Astrocyte of the cerebellum (primary cell): ENCODE measurements at regions of chr9 and their contacts with region 1.

Region 1: DNA sequence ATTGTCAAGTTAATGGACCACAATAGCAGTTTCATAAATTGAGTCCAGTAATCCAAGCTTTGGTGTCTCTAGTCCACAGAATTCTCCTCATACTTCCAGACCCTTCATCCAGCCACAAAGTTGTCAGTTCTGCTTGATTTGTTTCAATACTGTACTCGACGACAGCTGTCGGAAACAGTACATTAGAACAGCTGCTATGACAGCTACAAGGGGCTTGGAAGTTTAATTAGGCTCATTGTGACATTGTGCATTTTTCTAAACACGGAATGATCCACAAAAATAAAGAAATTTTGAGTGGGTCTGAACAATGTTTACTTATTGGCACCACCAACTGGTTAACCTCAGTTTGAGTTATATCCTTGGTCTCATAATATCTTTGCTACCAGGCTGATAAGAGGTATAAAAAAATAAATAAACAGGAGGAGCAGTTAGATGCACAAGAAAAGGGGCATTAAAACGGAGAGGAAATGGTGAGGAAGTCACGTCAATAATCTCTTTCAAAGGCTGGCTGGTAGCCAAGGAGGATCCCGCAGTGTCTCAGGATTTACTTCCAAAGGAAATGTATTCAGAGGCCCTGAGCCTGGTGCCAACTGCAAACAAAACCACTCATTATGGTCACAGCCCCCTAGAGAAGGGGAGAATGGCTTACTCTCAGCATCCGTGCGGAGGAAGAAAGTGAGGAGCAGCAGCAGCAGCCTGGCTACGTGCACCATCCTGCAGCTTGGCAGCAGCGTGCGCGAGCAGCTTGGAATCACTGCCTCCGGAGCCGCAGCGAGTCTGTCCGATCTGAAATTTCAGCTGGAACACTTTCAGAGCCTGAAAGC is 933.8 kb upstream of the DMAC1 start:
- DNase-seq: peak; percentile 36
- H3K4me3 ChIP-seq: peak overlapping the region; percentile 8
- CTCF ChIP-seq: no peak

Region 2: GRCh38 chr9:8845376-8845775 is 112.0 kb after region 1 on chr9:
- in situ Hi-C with region 1: loop called (anchors 25 kb)
- DNase-seq: no peak
- H3K4me3 ChIP-seq: no peak overlapping the region
- CTCF ChIP-seq: no peak